Activated T-helper 2 cell treated with anti-CD3 and anti-CD28 coated beads, Interferon-gamma antibody, Interleukin-2, Interleukin-4, amounts not matched to agents 10 μg/mL and 5 μg/mL and 100 μg/mL, durations not matched to agents 14 hours and 24 hours and 36 hours (primary cell): ENCODE measurements at regions of chr1 and their contacts with region 1.

Region 1: DNA sequence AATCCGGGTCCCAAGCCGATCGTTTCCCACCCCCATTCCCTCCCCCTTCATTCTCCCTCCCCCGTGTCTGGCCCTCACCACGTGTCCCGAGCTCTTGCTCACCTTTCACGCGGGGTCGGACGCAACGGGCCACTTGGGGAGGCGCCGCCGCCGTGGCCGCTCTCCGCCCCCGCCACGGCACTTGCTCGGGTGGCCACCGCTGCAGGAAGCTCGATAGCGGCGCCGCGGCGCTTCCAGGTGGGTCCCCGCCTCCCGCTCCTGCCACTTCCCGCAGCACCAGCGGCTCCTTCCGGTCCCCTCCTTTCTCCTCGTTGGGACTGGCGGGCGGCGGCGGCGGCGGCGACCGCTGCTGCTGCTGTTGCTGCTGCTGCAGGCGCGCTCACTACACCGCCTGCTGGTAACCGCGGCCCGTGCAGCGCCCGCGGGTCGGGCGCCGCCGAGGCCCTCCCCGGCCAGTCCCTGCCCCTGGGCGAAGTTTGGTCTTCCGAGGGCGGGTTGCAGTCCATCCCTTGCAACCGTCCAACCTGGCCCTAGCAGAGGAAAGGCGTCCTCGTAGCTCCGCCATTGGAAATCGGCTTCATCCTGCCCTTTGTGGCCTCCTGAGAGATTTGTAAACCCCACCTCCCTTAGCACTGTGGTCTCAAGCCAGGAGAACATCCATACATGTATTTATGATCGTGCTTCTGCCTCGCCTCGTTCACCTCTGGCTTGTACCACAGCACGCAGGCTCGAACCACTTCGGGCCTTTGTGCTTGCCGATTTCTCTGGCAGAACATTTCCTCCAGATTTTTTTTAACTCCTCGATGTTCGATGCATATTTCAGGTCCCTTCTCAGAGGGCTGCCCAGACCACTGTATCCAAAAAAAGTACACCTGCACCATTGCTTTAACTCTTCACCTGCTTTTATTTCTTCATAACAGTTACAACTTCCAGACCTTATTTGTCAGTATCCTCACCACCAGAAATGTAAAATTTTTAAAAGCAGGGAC is 996 bp upstream of the ZZZ3 start:
- DNase-seq: peak; percentile 90
- H3K4me3 Mint-ChIP-seq: peak overlapping the region; percentile 85
- H3K27ac Mint-ChIP-seq: peak overlapping the region; percentile 91
- H3K4me1 Mint-ChIP-seq: peaks cover 24% of the 10 kb centered on the region
- H3K27me3 Mint-ChIP-seq: no peaks in the 10 kb centered on the region

Region 2: DNA sequence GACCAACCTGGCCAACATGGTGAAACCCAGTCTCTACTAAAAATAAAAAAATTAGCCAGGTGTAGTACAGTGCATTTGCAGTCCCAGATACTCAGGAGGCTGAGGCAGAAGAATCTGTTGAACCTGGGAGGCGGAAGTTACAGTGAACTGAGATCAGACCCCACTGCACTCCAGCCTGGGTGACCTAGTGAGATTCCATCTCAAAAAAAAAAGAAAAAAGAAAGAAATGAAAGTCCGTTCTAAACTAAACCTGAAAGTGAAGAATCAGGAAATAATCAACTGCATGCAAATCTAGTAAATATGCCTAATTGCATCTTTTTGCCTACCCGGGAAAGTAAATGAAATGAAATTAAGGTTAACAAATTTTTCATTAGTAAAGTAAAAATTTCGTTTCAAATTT is 100.5 kb before region 1 on chr1:
- intact Hi-C with region 1: loop called (anchors 5 kb)
- DNase-seq: no peak
- H3K4me3 Mint-ChIP-seq: no peak overlapping the region
- H3K27ac Mint-ChIP-seq: no peak overlapping the region
- H3K4me1 Mint-ChIP-seq: no peaks in the 10 kb centered on the region
- H3K27me3 Mint-ChIP-seq: no peaks in the 10 kb centered on the region

Region 3: GRCh38 chr1:77623066-77623465 is 60.4 kb before region 1 on chr1:
- intact Hi-C with region 1: no loop called
- DNase-seq: no peak
- H3K4me3 Mint-ChIP-seq: no peak overlapping the region
- H3K27ac Mint-ChIP-seq: no peak overlapping the region
- H3K4me1 Mint-ChIP-seq: peaks cover 4% of the 10 kb centered on the region
- H3K27me3 Mint-ChIP-seq: no peaks in the 10 kb centered on the region

Region 4: DNA sequence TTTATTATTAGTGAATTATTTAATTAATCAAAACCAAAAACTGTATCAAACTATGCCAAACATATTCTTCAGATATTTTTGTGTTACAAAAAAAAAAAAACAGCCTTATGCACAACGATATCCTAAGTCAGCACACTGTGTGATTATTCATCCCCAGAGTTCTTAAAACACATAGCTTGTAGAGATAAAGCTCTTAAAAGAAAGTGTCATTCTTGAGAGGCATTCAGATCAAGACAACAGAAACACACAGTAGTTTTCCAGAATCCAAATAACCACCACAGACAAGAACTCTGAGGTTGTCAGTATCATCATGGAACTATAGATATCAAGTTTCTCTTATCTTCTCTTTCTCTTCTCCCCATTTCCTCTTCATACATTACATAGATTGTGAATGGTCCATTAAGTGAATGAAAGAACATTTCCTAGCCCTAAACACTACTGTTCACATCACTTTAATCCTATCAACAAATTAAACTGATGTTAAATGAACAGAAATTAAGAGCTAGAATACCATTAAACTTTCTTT is 14.5 kb before region 1 on chr1:
- intact Hi-C with region 1: loop called (anchors 1 kb)
- DNase-seq: no peak
- H3K4me3 Mint-ChIP-seq: no peak overlapping the region
- H3K27ac Mint-ChIP-seq: peak overlapping the region; percentile 1
- H3K4me1 Mint-ChIP-seq: peaks cover 44% of the 10 kb centered on the region
- H3K27me3 Mint-ChIP-seq: no peaks in the 10 kb centered on the region

Region 5: GRCh38 chr1:77779529-77780281 is 96.3 kb after region 1 on chr1 and contains the start of gene MIGA1:
- intact Hi-C with region 1: loop called (anchors 1 kb)
- DNase-seq: peak; percentile 81
- H3K4me3 Mint-ChIP-seq: peak within 1 kb of the TSS; percentile 90
- H3K27ac Mint-ChIP-seq: peak within 1 kb of the TSS; percentile 77
- H3K4me1 Mint-ChIP-seq: peaks cover 26% of the 10 kb centered on the region
- H3K27me3 Mint-ChIP-seq: no peaks in the 10 kb centered on the region
- total RNA-seq, gene MIGA1: 8.4 and 9.4 TPM in 2 replicates

Region 6: DNA sequence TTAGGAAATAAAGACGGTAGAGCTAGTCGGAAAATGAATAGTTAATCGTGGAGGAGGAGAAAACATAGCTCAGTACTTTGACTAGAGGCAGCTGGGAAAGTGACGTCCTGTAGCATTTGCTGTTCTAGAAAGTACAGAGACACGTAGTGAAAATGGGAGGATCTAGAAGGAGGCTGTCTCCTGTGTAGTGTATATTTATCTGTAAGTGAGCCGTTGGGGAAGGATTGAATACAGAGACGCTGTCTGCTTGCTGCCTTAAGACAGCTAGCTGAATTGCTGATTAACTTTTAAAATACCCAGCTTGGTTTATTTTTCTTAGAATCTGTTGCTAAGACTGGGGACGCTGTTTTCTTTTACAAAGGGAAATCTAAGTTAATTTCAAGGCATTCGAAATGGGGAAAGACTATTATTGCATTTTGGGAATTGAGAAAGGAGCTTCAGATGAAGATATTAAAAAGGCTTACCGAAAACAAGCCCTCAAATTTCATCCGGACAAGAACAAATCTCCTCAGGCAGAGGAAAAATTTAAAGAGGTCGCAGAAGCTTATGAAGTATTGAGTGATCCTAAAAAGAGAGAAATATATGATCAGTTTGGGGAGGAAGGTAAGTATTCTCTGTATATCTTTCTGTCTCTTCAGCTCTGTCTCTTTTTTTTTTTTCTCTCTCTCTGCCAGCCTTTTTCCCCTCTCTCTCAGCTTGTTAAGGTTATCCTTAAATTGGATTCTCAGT is 321.4 kb after region 1 on chr1 and contains the start of gene DNAJB4:
- intact Hi-C with region 1: loop called (anchors 2 kb)
- DNase-seq: peak; percentile 63
- H3K4me3 Mint-ChIP-seq: peak within 1 kb of the TSS; percentile 94
- H3K27ac Mint-ChIP-seq: peak within 1 kb of the TSS; percentile 98
- H3K4me1 Mint-ChIP-seq: peaks cover 33% of the 10 kb centered on the region
- H3K27me3 Mint-ChIP-seq: no peaks in the 10 kb centered on the region
- total RNA-seq, gene DNAJB4: 12.5 and 14.6 TPM in 2 replicates

Region 7: GRCh38 chr1:78627321-78627720 is 943.9 kb after region 1 on chr1:
- intact Hi-C with region 1: loop called (anchors 2 kb)
- DNase-seq: no peak
- H3K4me3 Mint-ChIP-seq: no peak overlapping the region
- H3K27ac Mint-ChIP-seq: peak overlapping the region; percentile 36
- H3K4me1 Mint-ChIP-seq: peaks cover 59% of the 10 kb centered on the region
- H3K27me3 Mint-ChIP-seq: no peaks in the 10 kb centered on the region